ENCODE measurements at regions of chr12 and their contacts with region 1.

Region 1: DNA sequence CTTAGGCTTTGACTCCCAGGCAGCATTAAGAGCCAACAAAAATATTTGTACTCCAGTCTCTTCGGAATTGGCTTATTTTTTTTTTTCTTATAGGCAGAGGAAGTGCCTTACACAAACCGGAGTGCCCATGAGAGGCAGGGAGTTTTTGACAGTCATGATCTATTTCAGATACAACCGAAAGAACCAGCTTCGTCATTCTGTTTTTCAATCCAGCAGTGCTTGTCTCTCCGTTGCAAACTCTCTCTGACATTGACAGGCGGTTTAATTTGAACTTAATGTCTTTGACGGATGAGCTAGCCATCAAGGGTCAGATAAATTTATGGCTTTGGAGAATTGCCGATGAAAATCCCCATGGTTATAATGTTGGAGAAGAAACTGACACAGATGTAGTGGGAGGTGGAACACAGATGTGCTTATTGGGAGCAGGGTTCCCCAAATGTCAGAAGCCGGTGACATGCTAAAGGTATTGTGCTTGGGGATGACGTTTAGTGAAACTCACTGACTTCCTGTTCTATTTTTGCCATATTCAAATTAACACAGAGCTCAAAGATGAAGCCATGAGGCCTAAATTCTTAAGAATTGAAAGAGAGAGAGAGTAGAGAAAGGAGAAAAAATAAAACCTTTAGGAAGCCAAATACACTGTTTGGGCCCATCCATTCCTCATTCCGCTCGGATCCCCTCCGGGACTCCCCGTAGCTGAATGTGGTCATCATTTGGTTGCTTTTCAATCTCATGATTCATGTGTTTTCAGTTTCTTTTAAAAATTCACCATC is 59.7 kb downstream of the PLXNC1 start:
- DNase-seq: peak; percentile 33
- H3K4me3 Mint-ChIP-seq: peak overlapping the region; percentile 77
- H3K27ac Mint-ChIP-seq: peak overlapping the region; percentile 98
- H3K4me1 Mint-ChIP-seq: peaks cover 55% of the 10 kb centered on the region
- H3K27me3 Mint-ChIP-seq: no peaks in the 10 kb centered on the region

Region 2: DNA sequence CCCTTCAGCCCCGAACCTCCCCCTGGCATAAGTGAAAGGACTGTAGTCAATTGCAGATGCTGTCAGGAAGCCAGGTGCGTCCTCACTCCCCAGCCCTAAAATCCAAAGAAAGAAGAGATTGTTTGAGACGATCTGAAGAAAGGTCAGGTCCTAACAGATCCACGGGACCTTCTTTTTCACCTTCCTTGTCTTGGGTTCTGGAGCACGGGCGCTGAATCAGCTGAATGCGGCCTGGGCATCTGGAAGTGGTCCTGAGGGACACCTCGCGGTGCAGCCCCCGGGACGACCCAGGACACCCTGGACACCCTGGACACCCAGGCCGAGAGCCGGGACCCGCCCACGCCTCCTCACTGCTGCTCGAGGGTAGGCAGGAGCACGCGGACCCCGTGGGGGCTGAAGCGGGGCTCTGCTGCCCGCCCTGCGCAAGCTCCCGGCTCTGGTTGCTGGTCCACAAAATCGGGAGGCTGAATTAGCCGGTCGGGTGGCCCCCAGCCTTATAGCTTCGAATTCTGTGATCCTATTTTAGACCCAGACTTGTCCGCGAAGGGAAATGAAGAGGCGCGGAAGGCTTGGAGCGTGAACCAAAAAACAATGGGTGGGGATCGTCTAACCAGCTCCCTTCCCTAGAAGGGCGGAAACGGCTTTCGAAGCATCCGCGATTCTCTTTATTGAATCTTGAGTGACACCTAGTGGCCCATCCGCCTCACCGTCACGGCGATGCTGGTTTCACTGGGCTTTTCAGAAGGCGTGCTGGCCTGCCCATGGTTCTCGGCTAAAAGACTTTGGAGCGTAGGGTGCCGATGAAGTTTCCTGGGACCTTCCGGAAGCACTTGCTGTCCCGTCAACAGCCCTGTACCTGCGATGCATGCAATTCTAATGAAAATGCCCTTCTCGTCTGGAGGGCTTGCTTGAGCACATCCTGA is 106.0 kb before region 1 on chr12:
- intact Hi-C with region 1: no loop called
- DNase-seq: peak; percentile 81
- H3K4me3 Mint-ChIP-seq: peak overlapping the region; percentile 77
- H3K27ac Mint-ChIP-seq: peak overlapping the region; percentile 62
- H3K4me1 Mint-ChIP-seq: peaks cover 35% of the 10 kb centered on the region
- H3K27me3 Mint-ChIP-seq: peaks cover 2% of the 10 kb centered on the region

Region 3: DNA sequence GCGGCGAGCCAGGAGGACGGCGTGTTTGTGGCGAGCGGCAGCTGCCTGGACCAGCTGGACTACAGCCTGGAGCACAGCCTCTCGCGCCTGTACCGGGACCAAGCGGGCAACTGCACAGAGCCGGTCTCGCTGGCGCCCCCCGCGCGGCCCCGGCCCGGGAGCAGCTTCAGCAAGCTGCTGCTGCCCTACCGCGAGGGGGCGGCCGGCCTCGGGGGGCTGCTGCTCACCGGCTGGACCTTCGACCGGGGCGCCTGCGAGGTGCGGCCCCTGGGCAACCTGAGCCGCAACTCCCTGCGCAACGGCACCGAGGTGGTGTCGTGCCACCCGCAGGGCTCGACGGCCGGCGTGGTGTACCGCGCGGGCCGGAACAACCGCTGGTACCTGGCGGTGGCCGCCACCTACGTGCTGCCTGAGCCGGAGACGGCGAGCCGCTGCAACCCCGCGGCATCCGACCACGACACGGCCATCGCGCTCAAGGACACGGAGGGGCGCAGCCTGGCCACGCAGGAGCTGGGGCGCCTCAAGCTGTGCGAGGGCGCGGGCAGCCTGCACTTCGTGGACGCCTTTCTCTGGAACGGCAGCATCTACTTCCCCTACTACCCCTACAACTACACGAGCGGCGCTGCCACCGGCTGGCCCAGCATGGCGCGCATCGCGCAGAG is 58.8 kb before region 1 on chr12:
- intact Hi-C with region 1: loop called (anchors 1 kb)
- DNase-seq: peak; percentile 40
- H3K4me3 Mint-ChIP-seq: peak overlapping the region; percentile 87
- H3K27ac Mint-ChIP-seq: peak overlapping the region; percentile 47
- H3K4me1 Mint-ChIP-seq: peaks cover 30% of the 10 kb centered on the region
- H3K27me3 Mint-ChIP-seq: peaks cover 47% of the 10 kb centered on the region

Region 4: DNA sequence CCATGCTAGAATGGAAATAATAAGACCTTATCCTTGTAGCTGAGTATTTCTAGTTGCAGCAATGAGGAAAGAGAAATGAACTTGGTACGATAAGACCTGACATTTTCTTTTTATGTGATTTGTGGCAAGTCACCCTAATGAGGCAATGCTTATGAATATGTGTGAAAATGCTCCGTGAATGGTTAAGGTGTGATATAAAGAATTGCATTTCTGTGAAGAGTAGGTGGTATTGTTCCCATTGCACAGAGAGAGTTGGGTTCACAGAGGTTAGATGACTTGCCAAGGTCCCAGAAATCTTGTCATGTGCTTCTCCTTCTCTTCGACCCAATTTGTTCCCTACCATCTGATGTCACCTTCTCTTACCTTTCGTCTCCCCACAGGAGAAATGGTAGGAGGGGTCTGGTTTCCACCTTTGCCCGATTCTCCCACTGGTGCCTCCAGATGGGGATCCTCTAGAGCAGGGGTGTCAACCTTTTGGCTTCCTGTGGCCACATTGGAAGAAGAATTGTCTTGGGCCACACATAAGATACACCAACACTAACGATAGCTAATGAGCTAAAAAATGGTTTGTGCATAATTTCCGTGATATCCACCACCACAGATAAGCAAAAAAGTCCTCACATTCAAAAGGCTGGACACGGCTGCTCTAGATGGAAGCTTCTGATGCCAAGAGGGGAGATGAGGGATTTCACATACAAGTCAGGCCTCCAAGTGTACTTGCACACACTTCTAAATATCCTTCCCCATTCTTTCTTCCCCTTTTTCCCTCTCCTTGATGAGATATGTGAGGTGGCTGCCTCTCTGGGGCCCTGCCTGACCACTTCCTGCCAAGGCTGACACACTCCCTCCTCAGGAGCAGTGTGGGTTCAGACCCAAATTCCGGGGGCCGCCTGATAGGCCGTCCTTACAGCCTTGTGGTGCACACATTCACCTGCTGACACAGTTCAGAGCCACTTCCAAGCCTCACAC is 36.4 kb after region 1 on chr12:
- intact Hi-C with region 1: loop called (anchors 5 kb)
- DNase-seq: peak; percentile 25
- H3K4me3 Mint-ChIP-seq: peak overlapping the region; percentile 22
- H3K27ac Mint-ChIP-seq: peak overlapping the region; percentile 55
- H3K4me1 Mint-ChIP-seq: peaks cover 29% of the 10 kb centered on the region
- H3K27me3 Mint-ChIP-seq: no peaks in the 10 kb centered on the region

Region 5: DNA sequence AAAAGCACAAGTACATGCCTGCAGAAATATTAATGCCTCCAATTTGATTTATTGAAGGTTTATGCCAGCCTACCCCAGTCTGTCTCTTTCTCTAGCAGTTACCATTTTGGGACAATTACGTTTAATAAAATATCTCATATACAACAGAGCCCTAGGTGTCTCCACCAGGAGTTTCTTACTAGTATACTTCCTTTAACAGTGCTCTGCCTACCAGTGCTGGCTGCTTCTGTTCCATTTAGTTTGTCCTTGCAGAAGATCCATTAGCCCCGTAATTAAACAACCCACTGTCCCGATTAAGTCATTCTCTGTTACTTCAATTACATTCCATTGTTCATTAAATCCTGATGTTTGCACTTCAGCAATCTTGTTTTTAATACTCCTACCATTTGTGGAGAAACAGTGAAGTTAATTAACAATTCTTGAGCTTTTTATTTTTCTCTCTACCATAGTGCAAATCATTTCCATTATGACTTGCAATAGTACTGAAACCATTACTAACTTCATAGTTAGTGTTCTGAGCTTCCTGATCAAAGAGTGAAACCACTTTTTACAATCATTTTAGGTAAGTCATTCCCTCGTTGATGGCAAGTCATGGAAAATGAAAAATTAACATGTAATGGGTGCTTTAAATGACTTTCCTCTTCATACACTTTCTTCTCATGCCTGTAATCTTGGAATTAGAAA is 61.4 kb after region 1 on chr12:
- intact Hi-C with region 1: loop called (anchors 1 kb)
- DNase-seq: no peak
- H3K4me3 Mint-ChIP-seq: no peak overlapping the region
- H3K27ac Mint-ChIP-seq: no peak overlapping the region
- H3K4me1 Mint-ChIP-seq: peaks cover 47% of the 10 kb centered on the region
- H3K27me3 Mint-ChIP-seq: no peaks in the 10 kb centered on the region

Region 6: GRCh38 chr12:94353130-94353529 is 145.1 kb after region 1 on chr12:
- intact Hi-C with region 1: no loop called
- DNase-seq: no peak
- H3K4me3 Mint-ChIP-seq: no peak overlapping the region
- H3K27ac Mint-ChIP-seq: peak overlapping the region; percentile 26
- H3K4me1 Mint-ChIP-seq: peaks cover 4% of the 10 kb centered on the region
- H3K27me3 Mint-ChIP-seq: no peaks in the 10 kb centered on the region

Region 7: GRCh38 chr12:94372461-94372860 is 164.4 kb after region 1 on chr12:
- intact Hi-C with region 1: loop called (anchors 1 kb)
- DNase-seq: no peak
- H3K4me3 Mint-ChIP-seq: peak overlapping the region; percentile 13
- H3K27ac Mint-ChIP-seq: peak overlapping the region; percentile 74
- H3K4me1 Mint-ChIP-seq: peaks cover 41% of the 10 kb centered on the region
- H3K27me3 Mint-ChIP-seq: no peaks in the 10 kb centered on the region

Region 8: DNA sequence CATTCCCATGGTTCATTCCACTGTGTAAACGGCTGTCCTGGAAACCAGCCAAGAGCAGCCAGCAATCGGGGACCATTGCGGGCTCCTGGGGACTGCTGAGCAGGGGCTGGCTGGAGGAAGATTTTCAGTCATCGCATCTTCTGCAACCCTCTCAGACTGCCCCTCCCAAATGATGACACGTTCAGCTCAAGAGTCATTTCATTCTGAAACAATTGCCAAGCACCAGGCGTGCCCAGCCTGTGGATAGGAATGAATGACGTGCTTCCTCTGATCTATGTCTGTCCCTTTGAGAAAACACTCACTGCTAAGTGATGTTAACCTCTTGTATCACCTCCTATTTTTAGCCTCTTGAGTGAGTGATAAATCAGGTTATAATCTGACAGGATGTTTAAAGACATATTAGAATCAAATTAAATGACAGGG is 733.4 kb after region 1 on chr12:
- intact Hi-C with region 1: loop called (anchors 5 kb)
- DNase-seq: peak; percentile 53
- H3K4me3 Mint-ChIP-seq: no peak overlapping the region
- H3K27ac Mint-ChIP-seq: peak overlapping the region; percentile 47
- H3K4me1 Mint-ChIP-seq: peaks cover 33% of the 10 kb centered on the region
- H3K27me3 Mint-ChIP-seq: peaks cover 5% of the 10 kb centered on the region

Measured in activated T-helper 2 cell treated with anti-CD3 and anti-CD28 coated beads, Interferon-gamma antibody, Interleukin-2, Interleukin-4, amounts not matched to agents 10 μg/mL and 5 μg/mL and 100 μg/mL, durations not matched to agents 14 hours and 24 hours and 36 hours (primary cell).